B cell (primary cell): ENCODE measurements at regions of chr11 and their contacts with region 1.

Region 1: GRCh38 chr11:125724125-125724524 is 22.0 kb upstream of the PATE1 start:
- DNase-seq: no peak
- ATAC-seq: no peak
- H3K4me3 ChIP-seq: no peak overlapping the region
- H3K4me3 Mint-ChIP-seq: no peak overlapping the region
- H3K27ac ChIP-seq: no peak overlapping the region
- H3K27ac Mint-ChIP-seq: no peak overlapping the region
- H3K4me1 ChIP-seq: no peaks in the 10 kb centered on the region
- H3K4me1 Mint-ChIP-seq: no peaks in the 10 kb centered on the region
- H3K27me3 ChIP-seq: peaks cover 0 to 4% (median under 1%) of the 10 kb centered on the region in 4 experiments
- H3K27me3 Mint-ChIP-seq: peaks cover 21% of the 10 kb centered on the region
- CTCF ChIP-seq: no peak

Region 2: DNA sequence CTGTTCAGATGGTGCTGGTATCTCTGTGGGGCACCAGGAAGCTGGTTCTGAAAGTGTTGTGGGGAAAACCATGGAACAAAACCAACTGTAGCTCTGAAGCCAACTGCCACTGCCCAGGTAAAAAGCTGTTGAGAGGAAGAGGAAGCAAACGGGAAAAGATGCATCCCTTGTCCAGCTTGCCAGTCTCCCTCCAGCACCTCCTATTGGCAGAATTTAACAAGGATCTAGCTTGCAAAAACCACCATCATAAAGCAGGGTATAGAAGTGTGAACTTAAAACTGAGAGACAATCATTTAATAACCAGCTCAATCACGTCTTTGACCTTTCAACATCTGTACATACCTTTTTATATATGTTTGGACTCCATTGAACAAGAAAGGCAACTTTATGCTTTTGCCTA is 26.5 kb after region 1 on chr11:
- CTCF ChIA-PET with region 1: no interaction called
- POLR2A ChIA-PET with region 1: no interaction called
- intact Hi-C with region 1: no loop called
- DNase-seq: no peak
- ATAC-seq: no peak
- H3K4me3 ChIP-seq: no peak overlapping the region
- H3K4me3 Mint-ChIP-seq: no peak overlapping the region
- H3K27ac ChIP-seq: no peak overlapping the region
- H3K27ac Mint-ChIP-seq: no peak overlapping the region
- H3K4me1 ChIP-seq: no peaks in the 10 kb centered on the region
- H3K4me1 Mint-ChIP-seq: no peaks in the 10 kb centered on the region
- H3K27me3 ChIP-seq: peaks cover 0 to 11% (median 1%) of the 10 kb centered on the region in 4 experiments
- H3K27me3 Mint-ChIP-seq: peaks cover 7% of the 10 kb centered on the region
- CTCF ChIP-seq: no peak

Region 3: DNA sequence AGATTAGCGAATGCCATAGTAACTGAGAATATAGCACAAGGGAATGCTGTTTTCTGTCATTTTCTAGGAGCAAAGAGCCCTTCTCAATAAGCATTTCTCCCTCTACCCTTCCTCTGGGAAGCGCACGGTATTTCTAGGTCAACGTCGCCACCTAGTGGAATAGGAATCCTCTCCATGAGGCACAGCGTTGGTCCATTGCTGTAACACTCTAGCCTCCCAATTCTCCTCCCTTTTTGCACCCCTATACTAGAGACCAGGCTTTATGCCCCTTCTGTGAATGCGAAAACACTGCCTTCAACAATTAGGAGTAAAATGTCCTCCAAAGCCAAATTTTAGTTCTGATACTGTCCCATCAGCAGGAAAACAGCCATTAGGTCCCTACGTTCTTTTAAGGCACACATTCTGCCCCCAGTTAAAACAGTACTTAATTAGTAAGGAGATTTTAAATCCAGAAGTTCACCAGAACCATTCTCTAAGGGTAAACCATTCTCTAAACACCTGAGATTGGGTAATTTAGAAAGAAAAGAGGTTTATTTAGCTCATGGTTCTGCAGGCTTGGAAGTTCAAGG is 150.5 kb after region 1 on chr11:
- CTCF ChIA-PET with region 1: interaction called, 5 read pairs
- POLR2A ChIA-PET with region 1: interaction called, 5 read pairs
- intact Hi-C with region 1: loop called (anchors 2 kb)
- DNase-seq: peak; percentile 63
- ATAC-seq: peak; percentile 49
- H3K4me3 ChIP-seq: no peak overlapping the region
- H3K4me3 Mint-ChIP-seq: no peak overlapping the region
- H3K27ac ChIP-seq: no peak overlapping the region
- H3K27ac Mint-ChIP-seq: no peak overlapping the region
- H3K4me1 ChIP-seq: peaks cover 0 to 3% of the 10 kb centered on the region in 2 donors
- H3K4me1 Mint-ChIP-seq: peaks cover 10% of the 10 kb centered on the region
- H3K27me3 ChIP-seq: no peaks in the 10 kb centered on the region
- H3K27me3 Mint-ChIP-seq: no peaks in the 10 kb centered on the region
- CTCF ChIP-seq: peak; percentile 74